H1 (cell line): ENCODE measurements at regions of chr14 and their contacts with region 1.

Region 1: DNA sequence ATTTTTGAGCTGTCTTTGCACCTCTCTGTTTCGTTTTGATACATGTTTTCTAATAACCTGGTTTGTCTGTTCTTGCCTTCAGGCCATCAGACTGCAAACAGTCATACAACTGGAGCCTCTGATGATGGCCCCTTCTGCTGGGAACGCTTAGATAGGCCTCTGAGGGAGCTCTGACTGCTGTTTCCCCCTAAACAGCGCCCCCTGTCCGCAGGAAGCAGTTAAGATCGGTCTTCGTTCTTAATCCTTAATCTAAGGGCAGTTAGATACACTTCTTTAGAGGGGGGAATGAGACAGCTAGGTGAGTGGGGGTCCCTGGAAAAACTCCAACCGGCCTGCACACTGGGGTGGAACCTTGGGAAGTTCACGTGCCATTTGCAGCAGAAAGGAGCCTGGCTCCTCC is 1338.8 kb upstream of the SEL1L start:
- DNase-seq: peak in 1 of 2 experiments; percentile 74
- H3K4me3 ChIP-seq: no peak overlapping the region
- H3K27ac ChIP-seq: no peak overlapping the region
- H3K4me1 ChIP-seq: no peaks in the 10 kb centered on the region
- H3K27me3 ChIP-seq: no peaks in the 10 kb centered on the region
- CTCF ChIP-seq: peak; percentile 67 to 84 (median 79)
- EP300 ChIP-seq: no peak
- POLR2A ChIP-seq: no peak
- RAD21 ChIP-seq: peak; percentile 68 to 71

Region 2: DNA sequence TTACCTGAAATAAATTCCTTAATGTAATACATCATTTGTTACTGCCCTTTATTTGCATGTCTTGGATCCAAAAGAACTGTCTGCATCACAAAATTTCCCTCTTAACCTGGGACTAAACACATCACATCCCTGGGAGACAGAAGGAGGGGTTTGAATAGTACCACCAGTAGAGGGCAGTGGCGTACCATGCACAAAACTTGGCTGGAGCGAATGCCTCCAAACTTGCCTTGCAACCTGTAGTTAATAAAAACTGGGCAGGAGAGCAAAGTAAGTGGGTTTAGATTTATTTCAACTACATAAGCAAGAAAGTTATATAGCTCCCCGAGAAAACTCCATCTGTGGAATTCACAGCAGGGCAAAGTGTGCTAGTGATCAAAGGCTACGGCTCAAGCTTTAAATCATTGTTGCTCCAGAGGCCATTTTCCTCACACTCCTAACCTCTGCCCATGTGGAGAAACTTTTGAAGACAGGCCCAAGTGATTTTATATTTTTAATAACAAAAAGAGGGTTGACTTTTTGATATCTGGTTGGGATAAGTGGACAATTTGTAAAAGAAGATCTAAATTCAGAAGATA is 162.1 kb before region 1 on chr14:
- CTCF ChIA-PET with region 1: interaction called, 13 read pairs
- POLR2A ChIA-PET with region 1: no interaction called
- DNase-seq: peak; percentile 27 to 86
- H3K4me3 ChIP-seq: no peak overlapping the region
- H3K27ac ChIP-seq: no peak overlapping the region
- H3K4me1 ChIP-seq: no peaks in the 10 kb centered on the region
- H3K27me3 ChIP-seq: no peaks in the 10 kb centered on the region
- CTCF ChIP-seq: peak; percentile 73 to 86 (median 85)
- EP300 ChIP-seq: no peak
- POLR2A ChIP-seq: no peak
- RAD21 ChIP-seq: peak; percentile 96

Region 3: GRCh38 chr14:82855912-82856391 is 16.5 kb before region 1 on chr14:
- CTCF ChIA-PET with region 1: interaction called, 25 read pairs
- POLR2A ChIA-PET with region 1: no interaction called
- DNase-seq: no peak
- H3K4me3 ChIP-seq: no peak overlapping the region
- H3K27ac ChIP-seq: no peak overlapping the region
- H3K4me1 ChIP-seq: no peaks in the 10 kb centered on the region
- H3K27me3 ChIP-seq: no peaks in the 10 kb centered on the region
- CTCF ChIP-seq: peak in 1 of 3 experiments; percentile 40; a peak in 1 of 4 replicates
- EP300 ChIP-seq: no peak
- POLR2A ChIP-seq: no peak
- RAD21 ChIP-seq: peak; percentile 33 to 44; a peak in 3 of 4 replicates

Region 4: DNA sequence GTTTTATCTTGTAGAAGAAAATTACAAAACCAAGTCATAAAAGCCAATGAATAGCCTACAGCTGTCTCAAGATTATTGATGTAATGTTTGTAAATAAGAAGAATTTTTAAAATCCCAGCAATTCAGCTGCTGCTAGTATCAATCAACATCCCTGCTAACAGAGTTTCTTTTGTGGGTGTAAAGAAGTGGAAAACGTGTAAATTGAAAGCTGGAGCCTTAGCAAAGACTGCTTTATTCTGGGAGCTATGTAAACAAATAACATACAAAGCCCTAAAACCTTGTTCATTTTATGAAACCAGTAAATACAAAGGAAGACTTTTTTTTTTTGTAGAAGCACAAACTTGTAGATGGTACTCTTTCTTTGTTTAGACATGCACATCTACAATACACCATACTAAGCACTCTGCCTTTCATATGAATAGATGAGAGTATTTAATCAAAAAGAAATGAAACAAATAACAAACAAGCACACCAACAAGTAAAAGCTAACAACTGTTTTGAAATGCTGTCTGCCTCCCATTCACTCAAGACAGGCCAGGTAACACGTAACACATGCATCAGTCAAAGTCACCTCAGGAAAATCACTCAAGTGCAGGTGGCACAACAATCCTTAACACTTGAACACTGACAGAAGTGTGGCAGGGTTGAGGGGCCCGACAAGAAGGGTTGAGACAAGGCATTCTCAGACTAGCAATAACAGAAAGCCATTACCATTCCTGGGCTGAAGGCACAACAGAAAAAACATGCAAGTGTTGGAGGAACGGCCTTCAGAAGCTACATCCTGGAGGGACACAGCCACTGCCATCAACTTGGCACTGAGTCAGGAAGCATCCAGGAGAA is 25.2 kb after region 1 on chr14:
- CTCF ChIA-PET with region 1: interaction called, 14 read pairs
- POLR2A ChIA-PET with region 1: no interaction called
- DNase-seq: no peak
- H3K4me3 ChIP-seq: no peak overlapping the region
- H3K27ac ChIP-seq: no peak overlapping the region
- H3K4me1 ChIP-seq: no peaks in the 10 kb centered on the region
- H3K27me3 ChIP-seq: no peaks in the 10 kb centered on the region
- CTCF ChIP-seq: no peak
- EP300 ChIP-seq: no peak
- POLR2A ChIP-seq: no peak
- RAD21 ChIP-seq: no peak

Region 5: GRCh38 chr14:83025989-83026388 is 153.5 kb after region 1 on chr14:
- CTCF ChIA-PET with region 1: no interaction called
- POLR2A ChIA-PET with region 1: no interaction called
- DNase-seq: no peak
- H3K4me3 ChIP-seq: no peak overlapping the region
- H3K27ac ChIP-seq: no peak overlapping the region
- H3K4me1 ChIP-seq: no peaks in the 10 kb centered on the region; a peak in 1 of 7 replicates
- H3K27me3 ChIP-seq: no peaks in the 10 kb centered on the region
- CTCF ChIP-seq: no peak
- EP300 ChIP-seq: no peak
- POLR2A ChIP-seq: no peak
- RAD21 ChIP-seq: no peak